ENCODE measurements at regions of chr1 and their contacts with region 1.

Region 1: DNA sequence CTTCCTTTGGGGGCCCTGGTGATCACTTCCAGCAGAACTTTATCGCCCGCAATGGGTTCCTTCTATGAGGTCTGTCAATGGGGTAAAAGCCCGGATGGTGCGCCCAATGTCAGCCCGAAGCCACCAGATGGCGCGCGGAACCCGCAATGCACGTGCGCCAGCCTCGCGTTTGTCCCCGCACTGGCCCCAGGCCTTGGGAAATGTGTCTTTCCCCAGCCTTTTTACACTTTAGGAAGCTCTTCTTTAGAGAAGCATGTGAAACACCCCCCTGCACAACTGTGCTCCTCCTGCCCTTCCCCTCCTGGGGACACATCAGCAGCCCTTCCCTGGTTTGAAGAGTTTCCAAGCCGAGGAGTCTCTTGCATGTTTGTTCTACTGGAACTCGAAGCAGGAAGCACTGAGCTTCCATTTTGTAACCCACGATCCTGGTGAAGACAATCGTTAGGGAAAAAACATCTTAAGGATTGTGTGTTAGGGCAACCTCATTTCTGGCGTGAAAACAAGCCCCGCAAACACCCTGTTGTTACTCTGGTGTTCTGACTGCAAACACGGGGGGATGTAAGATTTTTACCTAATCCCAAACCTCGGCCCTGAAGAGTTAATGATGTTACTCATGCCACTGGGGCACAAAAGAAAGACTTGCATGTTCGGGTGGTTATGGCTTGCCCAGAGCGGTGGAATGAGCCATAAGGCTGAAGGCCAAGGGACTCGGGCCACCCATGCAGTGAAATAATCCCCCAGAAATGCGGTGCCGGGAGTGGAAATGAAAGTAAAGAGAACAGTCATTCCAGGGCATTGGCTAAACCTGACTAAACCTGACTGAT is 20.4 kb upstream of the TARBP1 start:
- DNase-seq: peak; percentile 71 to 96
- H3K4me3 ChIP-seq: peak overlapping the region; percentile 17 to 49
- H3K27ac ChIP-seq: peak overlapping the region; percentile 85 to 95
- H3K4me1 ChIP-seq: peaks cover 8 to 30% of the 10 kb centered on the region in 2 donors
- H3K27me3 ChIP-seq: no peaks in the 10 kb centered on the region
- CTCF ChIP-seq: peak; percentile 94 to 97 (median 94)

Region 2: GRCh38 chr1:234579967-234580366 is 80.6 kb after region 1 on chr1:
- intact Hi-C with region 1: loop called (anchors 1 kb)
- DNase-seq: no peak
- H3K4me3 ChIP-seq: no peak overlapping the region
- H3K27ac ChIP-seq: no peak overlapping the region
- H3K4me1 ChIP-seq: peaks cover 8 to 32% of the 10 kb centered on the region in 2 donors
- H3K27me3 ChIP-seq: no peaks in the 10 kb centered on the region
- CTCF ChIP-seq: no peak

Region 3: GRCh38 chr1:234599617-234600417 is 100.5 kb after region 1 on chr1:
- intact Hi-C with region 1: loop called (anchors 1 kb)
- DNase-seq: peak; percentile 76 to 96
- H3K4me3 ChIP-seq: peak overlapping the region; percentile 49 to 57
- H3K27ac ChIP-seq: peak overlapping the region; percentile 96 to 99
- H3K4me1 ChIP-seq: peaks cover 11 to 40% of the 10 kb centered on the region in 2 donors
- H3K27me3 ChIP-seq: no peaks in the 10 kb centered on the region
- CTCF ChIP-seq: peak in 1 of 3 experiments; percentile 9

Region 4: GRCh38 chr1:234610348-234611152 is 111.2 kb after region 1 on chr1:
- intact Hi-C with region 1: no loop called
- DNase-seq: peak; percentile 90 to 98
- H3K4me3 ChIP-seq: peak overlapping the region; percentile 66 to 74
- H3K27ac ChIP-seq: peak overlapping the region; percentile 94 to 99
- H3K4me1 ChIP-seq: peaks cover 15 to 31% of the 10 kb centered on the region in 2 donors
- H3K27me3 ChIP-seq: no peaks in the 10 kb centered on the region
- CTCF ChIP-seq: no peak

Region 5: GRCh38 chr1:234755449-234755863 is 256.1 kb after region 1 on chr1:
- intact Hi-C with region 1: no loop called
- DNase-seq: peak; percentile 57 to 87
- H3K4me3 ChIP-seq: no peak overlapping the region
- H3K27ac ChIP-seq: no peak overlapping the region
- H3K4me1 ChIP-seq: peaks cover 0 to 8% of the 10 kb centered on the region in 2 donors
- H3K27me3 ChIP-seq: no peaks in the 10 kb centered on the region
- CTCF ChIP-seq: no peak

Region 6: DNA sequence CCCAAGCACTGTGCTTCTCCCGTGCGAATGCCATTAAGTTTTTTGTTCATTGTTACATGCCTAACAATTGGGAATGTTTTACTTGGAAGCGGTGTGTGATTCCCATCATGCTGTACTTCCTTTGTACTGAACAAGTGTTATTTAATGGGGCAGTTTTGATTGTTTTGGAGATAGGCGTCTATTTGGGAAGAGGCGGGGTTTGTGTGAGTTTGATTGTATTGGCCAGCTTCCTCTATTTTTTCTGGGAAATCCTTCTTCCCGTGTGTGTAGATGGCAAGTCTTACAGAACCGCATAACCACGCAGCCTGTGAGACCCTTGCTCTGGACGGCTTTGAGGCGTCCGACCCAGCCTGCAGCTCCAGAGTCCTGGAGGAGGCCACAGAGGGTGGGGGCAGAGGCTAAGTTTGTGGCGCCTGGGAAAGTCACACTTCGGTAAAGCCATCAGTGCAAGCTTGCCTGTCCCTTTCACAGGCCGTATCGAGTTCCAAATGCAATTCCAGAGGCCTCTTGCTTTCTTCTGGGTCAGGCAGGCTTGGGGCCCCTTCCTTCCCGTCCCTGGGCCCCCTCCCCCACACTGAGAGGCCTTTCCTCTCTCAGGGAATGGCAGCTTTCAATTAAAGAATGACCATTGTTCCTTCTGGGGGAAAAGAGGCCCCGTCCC is 419.0 kb after region 1 on chr1:
- intact Hi-C with region 1: loop called (anchors 2 kb)
- DNase-seq: peak in 1 of 2 donors; percentile 75
- H3K4me3 ChIP-seq: no peak overlapping the region
- H3K27ac ChIP-seq: peak overlapping the region; percentile 86 to 94
- H3K4me1 ChIP-seq: peaks cover 28 to 77% of the 10 kb centered on the region in 2 donors
- H3K27me3 ChIP-seq: no peaks in the 10 kb centered on the region
- CTCF ChIP-seq: no peak

Region 7: DNA sequence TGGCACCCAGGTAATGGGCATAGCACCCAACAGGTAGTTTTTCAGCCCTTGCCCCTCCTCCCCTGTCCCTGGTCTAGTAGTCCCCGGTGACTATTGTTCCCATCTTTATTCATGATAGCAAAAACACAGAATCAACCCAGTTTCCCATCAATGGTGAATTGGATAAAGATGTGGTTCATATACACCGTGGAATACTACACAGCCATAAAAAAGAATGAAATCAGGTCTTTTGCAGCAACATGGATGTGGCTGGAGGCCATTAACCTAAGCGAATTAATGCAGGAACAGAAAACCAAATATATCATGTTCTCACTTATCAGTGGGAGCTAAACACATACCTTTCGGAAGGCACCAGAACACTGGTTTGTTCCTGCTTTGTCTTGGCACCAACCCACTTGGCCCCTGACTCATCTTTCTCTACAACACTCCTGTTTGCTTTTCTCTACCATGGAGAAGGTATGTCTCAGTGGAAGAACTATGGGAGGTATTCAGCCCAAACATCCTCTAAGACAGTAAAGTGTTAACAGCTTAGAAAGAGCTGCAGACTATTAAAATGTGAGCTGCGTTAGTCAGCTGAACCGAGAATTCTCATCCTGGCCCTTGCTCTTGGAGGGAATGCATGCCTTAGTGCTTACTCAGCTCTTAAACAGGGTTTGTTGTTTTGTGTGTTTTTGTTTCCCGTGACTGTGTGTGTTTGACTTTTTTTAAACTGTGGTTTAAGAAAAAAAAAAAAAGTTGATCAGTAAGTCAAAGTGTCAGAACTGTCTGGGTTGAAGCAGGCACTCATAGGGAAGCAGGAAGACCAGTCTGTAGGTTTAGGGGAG is 426.3 kb after region 1 on chr1:
- intact Hi-C with region 1: loop called (anchors 1 kb)
- DNase-seq: peak in 1 of 2 donors; percentile 81
- H3K4me3 ChIP-seq: no peak overlapping the region
- H3K27ac ChIP-seq: peak overlapping the region; percentile 74 to 78
- H3K4me1 ChIP-seq: peaks cover 5 to 35% of the 10 kb centered on the region in 2 donors
- H3K27me3 ChIP-seq: no peaks in the 10 kb centered on the region
- CTCF ChIP-seq: no peak

Region 8: DNA sequence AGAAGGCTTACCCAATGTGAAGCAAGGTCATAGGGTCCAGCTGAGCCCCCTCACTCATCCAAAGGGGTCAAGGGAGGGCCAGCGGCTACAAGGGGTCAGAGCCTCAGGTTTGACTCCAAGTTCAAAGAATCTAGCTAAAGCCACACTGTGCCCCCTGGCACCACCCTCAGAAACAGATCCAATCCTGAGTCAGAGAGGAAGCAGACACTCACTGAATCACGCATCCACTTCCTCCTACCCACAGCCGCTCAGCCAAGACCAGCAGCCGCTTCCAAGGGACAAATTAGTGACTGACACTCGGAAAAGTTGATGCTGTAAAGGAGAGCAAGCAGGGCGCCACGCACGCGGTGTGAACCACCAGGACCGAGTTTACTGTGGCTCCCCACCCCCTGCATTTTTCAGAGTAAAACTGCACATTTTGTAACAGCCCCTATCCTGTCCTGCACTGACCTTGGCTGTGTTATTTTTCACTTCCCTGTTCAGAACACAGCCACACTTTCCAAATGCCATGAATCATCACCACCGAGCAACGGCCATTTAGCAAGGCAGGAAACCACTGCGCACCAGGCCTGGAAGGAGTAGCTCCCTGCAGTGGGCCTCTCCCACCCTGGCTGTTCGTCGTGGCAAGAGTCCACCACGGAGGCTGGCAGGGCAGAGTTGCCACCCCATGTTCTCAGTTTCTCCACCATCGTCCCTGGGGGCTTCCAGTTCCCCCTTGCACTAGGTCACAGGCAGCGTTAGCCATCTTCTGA is 481.5 kb after region 1 on chr1:
- intact Hi-C with region 1: loop called (anchors 5 kb)
- DNase-seq: peak; percentile 91 to 98
- H3K4me3 ChIP-seq: peak overlapping the region in 1 of 2 donors; percentile 44
- H3K27ac ChIP-seq: peak overlapping the region; percentile 98 to 99
- H3K4me1 ChIP-seq: peaks cover 24 to 65% of the 10 kb centered on the region in 2 donors
- H3K27me3 ChIP-seq: no peaks in the 10 kb centered on the region
- CTCF ChIP-seq: no peak

Measured in ascending aorta (tissue), 2 donors.